Aorta (tissue), 5 donors: ENCODE measurements at regions of chr19 and their contacts with region 1.

Region 1: DNA sequence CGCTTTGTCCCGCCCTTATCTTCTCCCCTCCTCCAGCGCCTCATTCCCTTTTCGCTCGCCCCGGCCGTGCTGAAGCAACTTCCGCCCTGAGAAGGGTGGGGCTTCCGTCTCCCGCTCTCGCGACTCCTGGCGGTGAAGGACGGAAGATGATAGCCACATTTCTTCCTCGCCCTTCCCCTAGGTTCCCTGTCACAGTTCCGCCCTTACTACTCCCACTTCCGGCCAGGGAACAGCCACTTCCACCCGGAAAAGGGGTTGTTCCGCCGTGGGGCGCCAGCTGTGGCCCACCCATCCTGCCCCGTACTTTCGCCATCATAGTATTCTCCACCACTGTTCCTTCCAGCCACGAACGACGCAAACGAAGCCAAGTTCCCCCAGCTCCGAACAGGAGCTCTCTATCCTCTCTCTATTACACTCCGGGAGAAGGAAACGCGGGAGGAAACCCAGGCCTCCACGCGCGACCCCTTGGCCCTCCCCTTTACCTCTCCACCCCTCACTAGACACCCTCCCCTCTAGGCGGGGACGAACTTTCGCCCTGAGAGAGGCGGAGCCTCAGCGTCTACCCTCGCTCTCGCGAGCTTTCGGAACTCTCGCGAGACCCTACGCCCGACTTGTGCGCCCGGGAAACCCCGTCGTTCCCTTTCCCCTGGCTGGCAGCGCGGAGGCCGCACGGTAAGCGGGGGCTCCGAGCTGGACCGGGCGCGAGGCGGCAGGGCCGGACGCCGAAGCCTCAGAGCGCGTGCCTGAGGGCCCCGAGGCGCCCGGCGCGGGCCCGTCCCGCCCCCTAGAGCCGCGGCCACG is at the start of gene RPS19:
- DNase-seq: peak; percentile 98 to 100
- ATAC-seq: peak; percentile 99
- H3K4me3 ChIP-seq: peak within 1 kb of the TSS; percentile 62 to 75
- H3K27ac ChIP-seq: peak within 1 kb of the TSS in 1 of 2 donors; percentile 79
- H3K4me1 ChIP-seq: peaks cover 0 to 6% of the 10 kb centered on the region in 2 donors
- H3K27me3 ChIP-seq: no peaks in the 10 kb centered on the region
- total RNA-seq, gene RPS19: 1,062 to 1,150 TPM

Region 2: DNA sequence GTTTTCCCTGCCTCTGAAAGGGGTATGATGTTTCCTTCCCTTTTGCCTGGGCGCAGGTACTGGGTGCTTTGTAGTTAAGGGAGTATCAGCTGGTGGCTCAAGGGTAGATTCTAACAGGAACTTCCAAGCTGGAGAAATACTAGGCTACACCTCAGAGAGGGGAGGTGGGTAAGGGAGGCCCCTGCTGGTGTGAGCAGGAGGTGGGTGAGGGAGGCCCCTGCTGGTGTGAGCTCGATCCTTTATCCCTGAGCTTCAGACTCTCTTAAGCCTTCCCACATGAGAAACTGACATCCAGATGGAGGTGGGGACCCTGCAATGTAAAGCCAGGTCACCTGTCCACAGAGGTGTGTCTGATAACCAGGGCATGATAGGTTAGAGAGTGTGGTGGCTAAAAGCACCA is 836.6 kb before region 1 on chr19:
- intact Hi-C with region 1: no loop called
- DNase-seq: no peak
- ATAC-seq: no peak
- H3K4me3 ChIP-seq: no peak overlapping the region
- H3K27ac ChIP-seq: no peak overlapping the region
- H3K4me1 ChIP-seq: no peaks in the 10 kb centered on the region
- H3K27me3 ChIP-seq: no peaks in the 10 kb centered on the region

Region 3: GRCh38 chr19:41657157-41657556 is 202.7 kb before region 1 on chr19:
- intact Hi-C with region 1: no loop called
- DNase-seq: no peak
- ATAC-seq: no peak
- H3K4me3 ChIP-seq: no peak overlapping the region
- H3K27ac ChIP-seq: no peak overlapping the region
- H3K4me1 ChIP-seq: no peaks in the 10 kb centered on the region
- H3K27me3 ChIP-seq: no peaks in the 10 kb centered on the region

Region 4: DNA sequence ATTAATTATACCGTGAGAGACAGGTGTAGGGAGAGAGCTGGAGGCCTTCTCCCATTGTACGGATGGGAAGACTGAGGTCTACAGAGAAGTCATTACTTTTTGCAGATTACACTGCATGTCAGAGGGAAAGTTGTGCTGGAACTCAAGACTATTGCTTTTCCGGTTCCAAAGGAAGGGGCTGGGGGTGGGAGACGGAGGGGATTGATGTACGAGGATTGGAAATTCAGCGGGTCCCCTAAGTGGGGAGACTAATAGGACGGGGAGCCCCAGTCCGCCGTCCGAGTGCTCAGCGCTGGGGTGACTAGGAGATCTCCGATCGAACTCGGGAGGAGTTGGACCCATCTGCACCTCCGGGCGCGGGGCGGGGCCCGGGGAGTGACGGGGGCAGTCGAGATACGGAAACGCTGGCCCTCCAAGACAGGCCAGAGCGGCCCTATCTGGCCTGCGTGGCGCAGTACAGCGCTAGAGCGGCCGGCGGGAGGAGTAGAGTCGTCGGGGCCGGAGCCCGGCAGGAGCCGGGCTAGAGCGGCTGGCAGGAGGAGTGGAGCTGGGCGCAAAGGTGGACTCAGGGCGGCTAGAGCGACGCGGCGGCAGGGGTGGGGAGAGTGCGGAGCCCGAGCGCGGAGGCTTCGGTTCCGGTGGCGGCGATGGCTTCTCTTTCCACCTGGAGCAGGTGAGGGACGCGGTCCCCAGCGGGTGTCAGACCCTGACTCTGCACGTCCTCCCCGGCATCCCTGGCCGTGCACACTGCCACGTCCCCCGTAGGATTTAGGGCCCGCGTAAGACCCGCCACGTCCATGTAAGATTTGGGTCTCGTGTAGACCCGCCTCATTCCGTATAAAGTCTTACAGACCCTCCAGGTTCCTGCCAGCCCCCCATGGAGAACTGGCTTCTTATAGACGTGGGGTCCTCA is 24.3 kb after region 1 on chr19:
- intact Hi-C with region 1: loop called (anchors 1 kb)
- DNase-seq: peak; percentile 97 to 98
- ATAC-seq: peak; percentile 98
- H3K4me3 ChIP-seq: peak overlapping the region; percentile 95 to 96
- H3K27ac ChIP-seq: no peak overlapping the region
- H3K4me1 ChIP-seq: no peaks in the 10 kb centered on the region
- H3K27me3 ChIP-seq: no peaks in the 10 kb centered on the region